ENCODE measurements at regions of chr7 and their contacts with region 1.

Region 1: GRCh38 chr7:87416682-87417587 is 58.5 kb downstream of the ABCB4 start:
- DNase-seq: peak; percentile 51 to 74
- H3K4me3 ChIP-seq: no peak overlapping the region
- H3K4me3 Mint-ChIP-seq: no peak overlapping the region
- H3K27ac Mint-ChIP-seq: no peak overlapping the region
- H3K4me1 ChIP-seq: peaks cover 27% of the 10 kb centered on the region
- H3K4me1 Mint-ChIP-seq: peaks cover 7% of the 10 kb centered on the region
- H3K27me3 ChIP-seq: no peaks in the 10 kb centered on the region
- H3K27me3 Mint-ChIP-seq: peaks cover 4% of the 10 kb centered on the region
- CTCF ChIP-seq: peak; percentile 50 to 64

Region 2: DNA sequence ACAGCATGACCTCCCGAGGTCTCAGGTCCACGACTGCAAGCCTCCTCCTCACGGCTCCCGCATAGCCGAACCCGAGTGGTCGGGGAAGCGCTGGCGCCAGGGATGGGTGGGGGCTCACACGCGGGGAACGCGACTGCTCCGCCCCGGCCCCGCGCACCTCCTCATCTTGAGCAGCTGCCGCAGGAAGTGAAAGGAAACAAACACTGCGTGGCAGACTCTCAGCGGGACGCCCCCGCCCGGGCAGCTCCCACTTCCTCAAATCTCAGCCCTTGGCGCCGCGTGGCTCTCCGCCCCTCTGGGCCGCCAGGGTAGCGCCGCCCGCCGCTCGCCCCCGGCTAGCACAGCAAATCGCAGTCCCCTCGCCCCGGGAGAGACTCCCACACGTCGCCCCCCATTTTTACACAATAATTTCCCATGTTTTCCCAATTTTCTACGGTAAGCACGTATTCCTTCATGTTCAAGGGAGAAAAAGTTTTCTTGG is 197.3 kb before region 1 on chr7 and contains the start of gene TMEM243:
- CTCF ChIA-PET with region 1: no interaction called
- POLR2A ChIA-PET with region 1: no interaction called
- intact Hi-C with region 1: loop called (anchors 10 kb)
- DNase-seq: peak; percentile 64 to 66
- H3K4me3 ChIP-seq: peak within 1 kb of the TSS; percentile 66
- H3K4me3 Mint-ChIP-seq: peak within 1 kb of the TSS; percentile 97
- H3K27ac Mint-ChIP-seq: peak within 1 kb of the TSS; percentile 74
- H3K4me1 ChIP-seq: peaks cover 5% of the 10 kb centered on the region
- H3K4me1 Mint-ChIP-seq: peaks cover 8% of the 10 kb centered on the region
- H3K27me3 ChIP-seq: no peaks in the 10 kb centered on the region
- H3K27me3 Mint-ChIP-seq: no peaks in the 10 kb centered on the region
- CTCF ChIP-seq: peak; percentile 22 to 26
- total RNA-seq, gene TMEM243: 24.2 and 28.6 TPM in 2 replicates

Region 3: DNA sequence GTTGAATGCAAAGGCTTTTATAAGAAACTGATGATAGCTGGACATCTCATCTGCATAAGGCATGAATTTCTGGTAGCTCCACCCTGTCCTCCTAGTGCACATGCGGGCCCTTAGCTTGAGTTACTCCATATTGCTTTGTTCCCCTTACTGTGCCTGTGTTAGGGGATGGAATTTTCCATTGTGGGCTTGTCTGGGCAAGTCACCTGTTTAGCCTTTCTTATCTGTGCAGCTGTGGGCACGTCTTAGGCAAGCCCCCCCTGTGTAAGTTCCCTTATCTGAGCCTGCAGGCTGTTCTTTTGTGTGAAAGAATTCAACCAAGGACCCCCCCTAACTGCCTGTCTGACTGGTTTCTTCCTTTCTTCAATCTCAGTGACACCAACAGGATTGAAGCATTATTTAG is 86.0 kb before region 1 on chr7:
- CTCF ChIA-PET with region 1: no interaction called
- POLR2A ChIA-PET with region 1: no interaction called
- intact Hi-C with region 1: loop called (anchors 1 kb)
- DNase-seq: peak; percentile 63 to 69
- H3K4me3 ChIP-seq: no peak overlapping the region
- H3K4me3 Mint-ChIP-seq: no peak overlapping the region
- H3K27ac Mint-ChIP-seq: peak overlapping the region; percentile 78
- H3K4me1 ChIP-seq: peaks cover 24% of the 10 kb centered on the region
- H3K4me1 Mint-ChIP-seq: peaks cover 7% of the 10 kb centered on the region
- H3K27me3 ChIP-seq: no peaks in the 10 kb centered on the region
- H3K27me3 Mint-ChIP-seq: no peaks in the 10 kb centered on the region
- CTCF ChIP-seq: no peak

Region 4: GRCh38 chr7:87452273-87452672 is 35.3 kb after region 1 on chr7:
- CTCF ChIA-PET with region 1: no interaction called
- POLR2A ChIA-PET with region 1: no interaction called
- intact Hi-C with region 1: loop called (anchors 1 kb)
- DNase-seq: no peak
- H3K4me3 ChIP-seq: no peak overlapping the region
- H3K4me3 Mint-ChIP-seq: no peak overlapping the region
- H3K27ac Mint-ChIP-seq: no peak overlapping the region
- H3K4me1 ChIP-seq: peaks cover 5% of the 10 kb centered on the region; the same call in 1 of the 2 replicates
- H3K4me1 Mint-ChIP-seq: no peaks in the 10 kb centered on the region
- H3K27me3 ChIP-seq: no peaks in the 10 kb centered on the region
- H3K27me3 Mint-ChIP-seq: no peaks in the 10 kb centered on the region
- CTCF ChIP-seq: no peak

Region 5: DNA sequence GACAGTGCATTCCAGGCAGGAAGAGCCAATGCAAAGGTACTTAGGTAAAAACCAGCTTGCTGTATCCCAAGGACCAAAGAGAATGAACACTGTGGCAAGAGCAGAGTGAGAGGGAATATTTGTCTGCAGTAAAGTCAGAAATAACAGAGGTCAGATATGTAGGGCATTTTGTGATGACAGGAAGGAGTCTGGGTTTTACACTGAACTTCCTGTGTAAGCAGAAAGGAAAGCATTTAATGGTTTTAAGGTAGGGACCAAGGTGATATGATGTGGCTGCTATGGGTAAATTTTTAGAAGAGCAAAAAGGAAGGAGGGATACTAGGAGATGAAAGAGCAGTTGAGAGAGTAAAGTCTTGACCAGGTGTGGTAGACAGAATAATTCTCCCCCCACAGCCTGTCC is 173.6 kb after region 1 on chr7:
- CTCF ChIA-PET with region 1: no interaction called
- POLR2A ChIA-PET with region 1: no interaction called
- intact Hi-C with region 1: no loop called
- DNase-seq: no peak
- H3K4me3 ChIP-seq: no peak overlapping the region
- H3K4me3 Mint-ChIP-seq: no peak overlapping the region
- H3K27ac Mint-ChIP-seq: no peak overlapping the region
- H3K4me1 ChIP-seq: peaks cover 15% of the 10 kb centered on the region
- H3K4me1 Mint-ChIP-seq: no peaks in the 10 kb centered on the region
- H3K27me3 ChIP-seq: no peaks in the 10 kb centered on the region; the same call in 1 of the 2 replicates
- H3K27me3 Mint-ChIP-seq: no peaks in the 10 kb centered on the region
- CTCF ChIP-seq: no peak